ENCODE measurements at regions of chr21 and their contacts with region 1.

Region 1: GRCh38 chr21:36319765-36320420 is at the start of gene MORC3:
- DNase-seq: peak; percentile 98
- ATAC-seq: peak; percentile 96
- total RNA-seq, gene MORC3: 18.9 TPM

Region 2: GRCh38 chr21:36141513-36141925 is 178.4 kb before region 1 on chr21:
- intact Hi-C with region 1: loop called (anchors 10 kb)
- DNase-seq: peak; percentile 53
- ATAC-seq: peak; percentile 88

Region 3: GRCh38 chr21:36630485-36631206 is 310.8 kb after region 1 on chr21:
- intact Hi-C with region 1: no loop called
- DNase-seq: peak; percentile 50
- ATAC-seq: peak; percentile 55

Measured in Right ventricle myocardium superior (tissue), 1 donor.